Vagina (tissue), 2 donors: ENCODE measurements at regions of chr3 and their contacts with region 1.

Region 1: GRCh38 chr3:179260949-179261765 is 10.2 kb upstream of the KCNMB3 start:
- DNase-seq: no peak
- H3K4me3 ChIP-seq: peak overlapping the region; percentile 62 to 64
- H3K27ac ChIP-seq: peak overlapping the region; percentile 60
- H3K4me1 ChIP-seq: no peaks in the 10 kb centered on the region
- H3K27me3 ChIP-seq: no peaks in the 10 kb centered on the region
- CTCF ChIP-seq: no peak
- POLR2A ChIP-seq: no peak

Region 2: GRCh38 chr3:179108086-179108485 is 153.1 kb before region 1 on chr3:
- intact Hi-C with region 1: no loop called
- DNase-seq: no peak
- H3K4me3 ChIP-seq: no peak overlapping the region
- H3K27ac ChIP-seq: no peak overlapping the region
- H3K4me1 ChIP-seq: no peaks in the 10 kb centered on the region
- H3K27me3 ChIP-seq: no peaks in the 10 kb centered on the region
- CTCF ChIP-seq: no peak
- POLR2A ChIP-seq: no peak

Region 3: DNA sequence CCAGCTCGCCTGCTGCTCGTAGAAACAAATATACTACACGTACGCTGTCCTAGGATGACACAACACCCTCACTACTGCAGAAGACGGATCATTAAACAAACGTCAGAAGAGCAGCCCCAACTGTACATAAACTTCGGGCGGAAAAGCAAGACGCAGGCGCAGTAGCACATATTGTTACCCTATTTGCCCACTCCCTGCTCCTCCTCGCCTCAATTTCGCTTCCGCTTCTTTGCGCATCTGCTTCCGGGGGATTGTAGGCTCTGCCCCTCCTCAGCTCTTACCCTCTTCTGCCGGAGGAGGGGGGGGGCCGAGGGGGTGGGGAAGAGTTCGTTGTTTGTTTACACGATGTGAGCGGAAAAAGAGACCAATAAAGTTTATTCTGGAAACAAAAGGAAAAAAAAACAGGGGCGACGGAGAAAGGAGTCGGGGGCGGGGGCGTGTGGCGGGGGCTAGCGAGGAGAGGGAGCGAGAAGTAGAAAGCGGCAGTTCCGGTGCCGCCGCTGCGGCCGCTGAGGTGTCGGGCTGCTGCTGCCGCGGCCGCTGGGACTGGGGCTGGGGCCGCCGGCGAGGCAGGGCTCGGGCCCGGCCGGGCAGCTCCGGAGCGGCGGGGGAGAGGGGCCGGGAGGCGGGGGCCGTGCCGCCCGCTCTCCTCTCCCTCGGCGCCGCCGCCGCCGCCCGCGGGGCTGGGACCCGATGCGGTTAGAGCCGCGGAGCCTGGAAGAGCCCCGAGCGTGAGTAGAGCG is 113.1 kb before region 1 on chr3 and contains the start of gene PIK3CA:
- intact Hi-C with region 1: loop called (anchors 5 kb)
- DNase-seq: peak in 1 of 2 donors; percentile 99
- H3K4me3 ChIP-seq: peak within 1 kb of the TSS; percentile 74 to 99
- H3K27ac ChIP-seq: peak within 1 kb of the TSS; percentile 99
- H3K4me1 ChIP-seq: peaks cover 39% of the 10 kb centered on the region
- H3K27me3 ChIP-seq: no peaks in the 10 kb centered on the region
- CTCF ChIP-seq: no peak
- POLR2A ChIP-seq: peak in 1 of 2 donors; percentile 49
- total RNA-seq, gene PIK3CA: 20.1 TPM